GM12878 (cell line): ENCODE measurements at regions of chr2 and their contacts with region 1.

Region 1: DNA sequence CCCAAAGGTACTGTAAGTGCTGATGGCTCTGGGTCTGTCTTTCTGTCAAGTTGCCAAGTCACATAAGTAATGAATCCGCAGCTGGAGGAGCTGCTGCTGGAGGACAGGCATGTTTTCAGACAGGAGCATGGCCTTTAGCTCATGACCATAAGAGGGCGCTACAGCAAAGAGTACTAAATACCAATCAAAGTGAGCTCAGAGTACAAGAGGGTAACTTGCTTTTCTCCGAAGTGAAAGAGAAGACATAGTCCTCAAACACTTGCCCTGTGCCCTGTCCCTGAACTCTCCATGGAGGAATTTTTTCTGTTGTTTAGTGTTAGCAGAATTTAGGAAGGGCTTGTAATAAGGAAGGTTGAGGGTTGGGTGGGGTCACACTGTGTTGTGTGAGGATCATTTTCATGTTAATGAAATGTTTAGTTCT is 58.0 kb upstream of the EML6 start:
- DNase-seq: no peak
- ATAC-seq: peak; percentile 80
- H3K4me3 ChIP-seq: no peak overlapping the region
- H3K27ac ChIP-seq: no peak overlapping the region
- H3K4me1 ChIP-seq: no peaks in the 10 kb centered on the region
- H3K27me3 ChIP-seq: no peaks in the 10 kb centered on the region
- CTCF ChIP-seq: peak; percentile 55 to 71 (median 71)
- EP300 ChIP-seq: no peak
- POLR2A ChIP-seq: no peak
- RAD21 ChIP-seq: peak; percentile 69

Region 2: DNA sequence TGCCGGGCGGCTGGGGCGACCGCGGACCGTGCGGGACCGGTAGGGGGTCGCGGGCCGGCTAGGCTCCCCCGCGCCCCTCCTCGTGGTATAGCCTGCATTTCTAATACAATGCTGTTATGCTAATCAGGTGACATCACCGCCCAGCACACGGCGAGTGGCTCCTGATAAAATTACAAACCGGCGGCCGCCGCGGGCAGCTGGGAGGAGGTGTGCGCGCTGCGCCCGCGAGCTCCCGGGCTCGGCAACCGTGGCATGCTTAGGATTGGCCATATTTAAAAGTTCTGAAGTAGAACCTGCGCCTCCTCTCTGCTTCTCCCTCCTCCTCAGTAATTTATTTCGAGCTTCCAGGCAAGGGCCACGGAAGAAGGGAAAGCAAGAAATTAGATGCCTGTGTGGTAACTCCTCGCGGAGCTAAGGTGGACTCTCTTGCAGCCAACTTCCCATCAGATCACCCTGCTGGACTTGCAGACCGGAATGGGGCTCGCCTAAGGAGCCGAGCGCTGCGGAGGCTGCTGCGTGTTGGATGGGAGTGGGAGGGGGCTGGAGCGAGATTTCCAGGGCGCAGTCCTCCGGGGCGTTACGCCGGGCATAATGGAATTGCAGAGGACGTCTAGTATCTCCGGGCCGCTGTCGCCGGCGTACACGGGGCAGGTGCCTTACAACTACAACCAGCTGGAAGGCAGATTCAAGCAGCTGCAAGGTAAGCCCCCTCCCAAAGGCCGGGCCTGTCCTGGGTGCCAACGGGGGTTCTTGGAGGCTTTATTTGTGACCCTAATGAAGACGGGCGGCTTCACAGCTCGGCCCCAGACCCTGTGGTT is 107.0 kb before region 1 on chr2:
- CTCF ChIA-PET with region 1: interaction called, 4 read pairs
- POLR2A ChIA-PET with region 1: no interaction called
- RAD21 ChIA-PET with region 1: interaction called, 7 read pairs
- SMC1A ChIA-PET with region 1: interaction called, 10 read pairs
- in situ Hi-C with region 1: no loop called
- intact Hi-C with region 1: no loop called
- DNase-seq: no peak
- ATAC-seq: peak; percentile 63
- H3K4me3 ChIP-seq: peak overlapping the region; percentile 99
- H3K27ac ChIP-seq: peak overlapping the region; percentile 96
- H3K4me1 ChIP-seq: peaks cover 18% of the 10 kb centered on the region
- H3K27me3 ChIP-seq: no peaks in the 10 kb centered on the region
- CTCF ChIP-seq: no peak
- EP300 ChIP-seq: no peak
- POLR2A ChIP-seq: peak; percentile 78
- RAD21 ChIP-seq: no peak

Region 3: GRCh38 chr2:54691445-54692135 is 26.1 kb after region 1 on chr2:
- CTCF ChIA-PET with region 1: interaction called, 41 read pairs
- POLR2A ChIA-PET with region 1: no interaction called
- RAD21 ChIA-PET with region 1: interaction called, 15 read pairs
- SMC1A ChIA-PET with region 1: interaction called, 50 read pairs
- in situ Hi-C with region 1: no loop called
- intact Hi-C with region 1: no loop called
- DNase-seq: no peak
- ATAC-seq: no peak
- H3K4me3 ChIP-seq: no peak overlapping the region
- H3K27ac ChIP-seq: no peak overlapping the region
- H3K4me1 ChIP-seq: no peaks in the 10 kb centered on the region; the same call in 1 of the 2 replicates
- H3K27me3 ChIP-seq: no peaks in the 10 kb centered on the region
- CTCF ChIP-seq: no peak
- EP300 ChIP-seq: no peak
- POLR2A ChIP-seq: no peak
- RAD21 ChIP-seq: no peak

Region 4: DNA sequence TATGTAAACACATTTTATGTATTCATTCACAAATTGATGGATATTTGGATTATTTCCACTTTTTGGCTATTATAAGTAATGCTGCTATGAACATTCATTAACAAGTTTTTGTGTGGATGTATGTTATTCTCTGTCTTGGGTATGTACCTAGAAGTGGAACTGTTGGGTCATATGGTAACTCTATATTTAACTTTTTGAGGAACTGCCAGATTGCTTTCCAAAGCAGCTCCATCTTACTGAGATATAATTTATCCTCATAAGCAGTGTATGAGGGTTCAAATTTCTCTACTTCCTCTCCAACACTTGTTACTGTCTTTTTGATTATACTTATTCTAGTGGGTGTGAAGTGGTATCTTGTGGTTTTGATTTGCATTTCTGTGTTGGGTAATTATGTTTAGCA is 50.9 kb after region 1 on chr2:
- CTCF ChIA-PET with region 1: interaction called, 13 read pairs
- POLR2A ChIA-PET with region 1: no interaction called
- RAD21 ChIA-PET with region 1: no interaction called
- SMC1A ChIA-PET with region 1: interaction called, 6 read pairs
- in situ Hi-C with region 1: no loop called
- intact Hi-C with region 1: no loop called
- DNase-seq: no peak
- ATAC-seq: peak; percentile 27; the same call in 1 of the 3 replicates
- H3K4me3 ChIP-seq: no peak overlapping the region
- H3K27ac ChIP-seq: no peak overlapping the region
- H3K4me1 ChIP-seq: no peaks in the 10 kb centered on the region
- H3K27me3 ChIP-seq: peaks cover 0 to 4% of the 10 kb centered on the region in 2 experiments; a peak in 3 of 4 replicates
- CTCF ChIP-seq: no peak
- EP300 ChIP-seq: no peak
- POLR2A ChIP-seq: no peak
- RAD21 ChIP-seq: no peak

Region 5: GRCh38 chr2:55175254-55176025 is 510.0 kb after region 1 on chr2:
- CTCF ChIA-PET with region 1: interaction called, 10 read pairs
- POLR2A ChIA-PET with region 1: no interaction called
- RAD21 ChIA-PET with region 1: interaction called, 3 read pairs
- SMC1A ChIA-PET with region 1: interaction called, 10 read pairs
- in situ Hi-C with region 1: no loop called
- intact Hi-C with region 1: no loop called
- DNase-seq: no peak
- ATAC-seq: peak; percentile 86
- H3K4me3 ChIP-seq: no peak overlapping the region
- H3K27ac ChIP-seq: no peak overlapping the region
- H3K4me1 ChIP-seq: no peaks in the 10 kb centered on the region
- H3K27me3 ChIP-seq: no peaks in the 10 kb centered on the region
- CTCF ChIP-seq: peak; percentile 39 to 68 (median 56); a peak in 4 of 6 replicates
- EP300 ChIP-seq: no peak
- POLR2A ChIP-seq: no peak
- RAD21 ChIP-seq: peak; percentile 82